CD8-positive, alpha-beta T cell (primary cell): ENCODE measurements at regions of chr15 and their contacts with region 1.

Region 1: DNA sequence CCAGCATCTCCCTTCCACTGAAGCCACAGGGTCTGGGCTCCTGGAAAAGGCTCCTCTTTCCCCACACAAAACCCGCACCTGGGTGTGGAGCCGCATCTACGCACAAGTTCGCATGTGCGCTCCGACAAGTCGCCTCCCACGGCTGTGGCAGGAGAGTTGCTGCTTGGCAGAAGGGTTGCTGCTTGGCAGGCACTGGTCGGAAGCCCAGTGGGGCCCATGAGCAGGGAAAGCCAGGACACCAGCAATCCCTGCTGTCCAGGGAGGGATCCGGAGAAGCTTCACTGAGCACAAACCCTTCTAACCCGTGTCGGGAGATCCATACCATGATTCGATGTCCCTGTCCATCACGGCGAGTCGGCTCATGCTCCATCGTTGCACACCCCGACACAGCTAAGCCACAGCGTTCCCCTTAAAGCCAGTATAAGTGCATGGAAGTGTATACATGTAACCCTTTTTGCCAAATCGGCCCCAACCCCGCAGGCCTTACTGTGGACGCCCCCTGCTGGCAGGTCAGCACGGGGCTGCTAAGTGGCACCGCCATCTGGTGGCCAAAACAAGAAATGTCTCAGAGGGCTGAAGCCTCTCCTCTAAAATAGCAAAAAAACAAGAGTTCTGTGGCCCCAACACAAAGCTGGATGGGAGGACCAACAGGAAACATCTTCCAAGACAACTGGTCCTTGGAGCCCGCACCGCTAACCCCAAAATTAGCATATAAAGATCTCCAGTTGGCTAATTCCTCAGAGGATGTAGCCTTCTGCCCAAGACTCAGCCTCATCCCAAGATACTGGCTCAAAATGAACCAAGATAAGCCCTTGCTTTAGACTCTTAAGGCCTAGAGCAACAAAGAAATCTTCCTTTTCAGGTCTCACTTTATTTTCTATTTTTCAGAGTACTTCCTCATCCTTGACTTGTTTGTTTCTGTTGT is 8.3 kb downstream of the ANKRD63 start:
- DNase-seq: peak; percentile 79 to 94 (median 88)
- ATAC-seq: peak; percentile 91
- H3K4me3 ChIP-seq: no peak overlapping the region
- H3K4me3 Mint-ChIP-seq: no peak overlapping the region
- H3K27ac ChIP-seq: no peak overlapping the region
- H3K27ac Mint-ChIP-seq: no peak overlapping the region
- H3K4me1 ChIP-seq: no peaks in the 10 kb centered on the region
- H3K4me1 Mint-ChIP-seq: peaks cover 5% of the 10 kb centered on the region
- H3K27me3 ChIP-seq: no peaks in the 10 kb centered on the region
- H3K27me3 Mint-ChIP-seq: peaks cover 12% of the 10 kb centered on the region
- CTCF ChIP-seq: peak; percentile 100

Region 2: GRCh38 chr15:39686000-39686613 is 588.5 kb before region 1 on chr15:
- CTCF ChIA-PET with region 1: interaction called, 4 read pairs
- POLR2A ChIA-PET with region 1: no interaction called
- intact Hi-C with region 1: loop called (anchors 1 to 5 kb)
- DNase-seq: peak in 6 of 9 experiments; percentile 4 to 71 (median 29)
- ATAC-seq: peak; percentile 49
- H3K4me3 ChIP-seq: no peak overlapping the region
- H3K4me3 Mint-ChIP-seq: no peak overlapping the region
- H3K27ac ChIP-seq: no peak overlapping the region
- H3K27ac Mint-ChIP-seq: no peak overlapping the region
- H3K4me1 ChIP-seq: no peaks in the 10 kb centered on the region
- H3K4me1 Mint-ChIP-seq: no peaks in the 10 kb centered on the region
- H3K27me3 ChIP-seq: no peaks in the 10 kb centered on the region
- H3K27me3 Mint-ChIP-seq: no peaks in the 10 kb centered on the region
- CTCF ChIP-seq: peak; percentile 93

Region 3: GRCh38 chr15:39997031-39997430 is 277.6 kb before region 1 on chr15:
- CTCF ChIA-PET with region 1: no interaction called
- POLR2A ChIA-PET with region 1: no interaction called
- intact Hi-C with region 1: no loop called
- DNase-seq: no peak
- ATAC-seq: no peak
- H3K4me3 ChIP-seq: no peak overlapping the region
- H3K4me3 Mint-ChIP-seq: no peak overlapping the region
- H3K27ac ChIP-seq: no peak overlapping the region
- H3K27ac Mint-ChIP-seq: no peak overlapping the region
- H3K4me1 ChIP-seq: no peaks in the 10 kb centered on the region
- H3K4me1 Mint-ChIP-seq: no peaks in the 10 kb centered on the region
- H3K27me3 ChIP-seq: no peaks in the 10 kb centered on the region
- H3K27me3 Mint-ChIP-seq: no peaks in the 10 kb centered on the region
- CTCF ChIP-seq: no peak

Region 4: GRCh38 chr15:40044717-40045571 is 229.7 kb before region 1 on chr15:
- CTCF ChIA-PET with region 1: interaction called, 108 read pairs
- POLR2A ChIA-PET with region 1: interaction called, 8 read pairs
- intact Hi-C with region 1: loop called (anchors 1 kb)
- DNase-seq: peak; percentile 58 to 91 (median 80)
- ATAC-seq: peak; percentile 89
- H3K4me3 ChIP-seq: no peak overlapping the region
- H3K4me3 Mint-ChIP-seq: peak overlapping the region; percentile 12
- H3K27ac ChIP-seq: no peak overlapping the region
- H3K27ac Mint-ChIP-seq: no peak overlapping the region
- H3K4me1 ChIP-seq: peaks cover 46% of the 10 kb centered on the region
- H3K4me1 Mint-ChIP-seq: peaks cover 55% of the 10 kb centered on the region
- H3K27me3 ChIP-seq: no peaks in the 10 kb centered on the region
- H3K27me3 Mint-ChIP-seq: no peaks in the 10 kb centered on the region
- CTCF ChIP-seq: peak; percentile 90

Region 5: GRCh38 chr15:40217159-40217824 is 57.3 kb before region 1 on chr15:
- CTCF ChIA-PET with region 1: interaction called, 205 read pairs
- POLR2A ChIA-PET with region 1: interaction called, 11 read pairs
- intact Hi-C with region 1: loop called (anchors 1 kb)
- DNase-seq: peak in 7 of 9 experiments; percentile 21 to 84 (median 36)
- ATAC-seq: peak; percentile 98
- H3K4me3 ChIP-seq: no peak overlapping the region
- H3K4me3 Mint-ChIP-seq: no peak overlapping the region
- H3K27ac ChIP-seq: no peak overlapping the region
- H3K27ac Mint-ChIP-seq: no peak overlapping the region
- H3K4me1 ChIP-seq: no peaks in the 10 kb centered on the region
- H3K4me1 Mint-ChIP-seq: no peaks in the 10 kb centered on the region
- H3K27me3 ChIP-seq: no peaks in the 10 kb centered on the region
- H3K27me3 Mint-ChIP-seq: no peaks in the 10 kb centered on the region
- CTCF ChIP-seq: peak; percentile 81

Region 6: GRCh38 chr15:40263024-40263754 is 11.4 kb before region 1 on chr15:
- CTCF ChIA-PET with region 1: interaction called, 51 read pairs
- POLR2A ChIA-PET with region 1: no interaction called
- intact Hi-C with region 1: no loop called
- DNase-seq: no peak
- ATAC-seq: no peak
- H3K4me3 ChIP-seq: no peak overlapping the region
- H3K4me3 Mint-ChIP-seq: no peak overlapping the region
- H3K27ac ChIP-seq: no peak overlapping the region
- H3K27ac Mint-ChIP-seq: no peak overlapping the region
- H3K4me1 ChIP-seq: no peaks in the 10 kb centered on the region
- H3K4me1 Mint-ChIP-seq: no peaks in the 10 kb centered on the region
- H3K27me3 ChIP-seq: no peaks in the 10 kb centered on the region
- H3K27me3 Mint-ChIP-seq: no peaks in the 10 kb centered on the region
- CTCF ChIP-seq: no peak

Region 7: GRCh38 chr15:40338041-40338657 is 63.5 kb after region 1 on chr15:
- CTCF ChIA-PET with region 1: interaction called, 497 read pairs
- POLR2A ChIA-PET with region 1: interaction called, 3 read pairs
- intact Hi-C with region 1: loop called (anchors 1 kb)
- DNase-seq: peak; percentile 54 to 86 (median 79)
- ATAC-seq: peak; percentile 96
- H3K4me3 ChIP-seq: no peak overlapping the region
- H3K4me3 Mint-ChIP-seq: no peak overlapping the region
- H3K27ac ChIP-seq: no peak overlapping the region
- H3K27ac Mint-ChIP-seq: no peak overlapping the region
- H3K4me1 ChIP-seq: peaks cover 17% of the 10 kb centered on the region
- H3K4me1 Mint-ChIP-seq: peaks cover 18% of the 10 kb centered on the region
- H3K27me3 ChIP-seq: no peaks in the 10 kb centered on the region
- H3K27me3 Mint-ChIP-seq: peaks cover 2% of the 10 kb centered on the region
- CTCF ChIP-seq: peak; percentile 82